ENCODE measurements at regions of chr5 and their contacts with region 1.

Region 1: DNA sequence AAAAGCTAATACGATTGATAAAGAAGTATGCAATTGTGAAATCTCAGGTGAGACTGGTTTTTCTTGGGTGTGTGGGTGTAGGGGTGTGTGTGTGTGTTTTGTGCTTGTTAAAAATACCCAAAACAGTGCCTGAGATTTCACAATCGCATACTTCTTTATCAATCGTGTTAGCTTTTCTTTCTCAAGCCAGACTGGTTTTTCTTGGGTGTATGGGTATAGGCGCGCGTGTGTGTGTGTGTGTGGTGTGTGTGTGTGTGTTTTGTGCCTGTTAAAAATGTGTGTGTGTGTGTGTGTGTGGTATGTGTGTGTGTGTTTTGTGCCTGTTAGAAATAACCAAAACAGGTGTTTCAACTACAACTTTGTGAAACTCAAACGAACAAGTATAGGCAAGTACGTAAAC is 53.7 kb downstream of the CERT1 start:
- DNase-seq: no peak
- H3K4me3 ChIP-seq: no peak overlapping the region
- H3K4me3 Mint-ChIP-seq: no peak overlapping the region
- H3K27ac ChIP-seq: no peak overlapping the region
- H3K27ac Mint-ChIP-seq: peak overlapping the region in 1 of 7 donors; percentile 59
- H3K4me1 ChIP-seq: peaks cover 13 to 19% of the 10 kb centered on the region in 2 donors
- H3K4me1 Mint-ChIP-seq: peaks cover 19% of the 10 kb centered on the region
- H3K27me3 ChIP-seq: no peaks in the 10 kb centered on the region
- H3K27me3 Mint-ChIP-seq: no peaks in the 10 kb centered on the region
- CTCF ChIP-seq: no peak

Region 2: DNA sequence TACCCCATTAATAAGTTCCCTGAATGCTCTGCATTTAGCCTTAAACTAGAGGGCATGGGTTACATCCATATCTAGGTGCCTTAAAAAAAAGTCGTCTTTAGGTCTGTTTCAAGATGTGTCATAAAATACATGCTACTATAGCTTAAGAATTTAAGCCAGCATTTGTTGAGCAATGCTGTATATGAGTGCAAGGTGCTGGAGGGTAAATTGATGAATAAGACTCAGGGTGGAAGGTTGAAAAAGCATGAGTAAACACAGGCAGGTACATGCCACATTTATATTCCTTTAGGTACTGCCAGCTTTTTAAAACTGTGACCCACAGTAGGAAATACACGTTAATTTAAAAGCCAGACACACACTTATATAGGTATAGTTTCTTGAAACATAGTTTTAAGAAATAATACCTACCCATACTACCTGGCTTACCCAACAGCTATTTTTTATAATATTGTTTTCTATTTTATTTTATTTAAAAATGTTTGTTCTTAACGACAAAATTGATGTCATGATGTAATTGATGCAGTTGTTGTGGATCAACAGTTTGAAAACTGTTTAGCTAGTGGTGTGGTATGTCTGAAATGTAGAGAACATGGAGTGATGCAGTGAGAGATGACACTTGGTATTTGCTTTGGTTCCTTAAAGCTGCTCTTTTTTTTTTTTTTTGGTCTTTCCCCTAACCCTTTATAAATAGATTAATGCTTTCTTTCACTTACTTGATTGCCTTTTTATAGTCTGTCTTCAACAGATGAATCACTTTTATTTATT is 116.8 kb before region 1 on chr5:
- intact Hi-C with region 1: no loop called
- DNase-seq: no peak
- H3K4me3 ChIP-seq: no peak overlapping the region
- H3K4me3 Mint-ChIP-seq: no peak overlapping the region
- H3K27ac ChIP-seq: no peak overlapping the region
- H3K27ac Mint-ChIP-seq: no peak overlapping the region
- H3K4me1 ChIP-seq: peaks cover 22 to 31% of the 10 kb centered on the region in 2 donors
- H3K4me1 Mint-ChIP-seq: peaks cover 33% of the 10 kb centered on the region
- H3K27me3 ChIP-seq: no peaks in the 10 kb centered on the region
- H3K27me3 Mint-ChIP-seq: no peaks in the 10 kb centered on the region
- CTCF ChIP-seq: no peak

Region 3: GRCh38 chr5:75482482-75482881 is 24.8 kb after region 1 on chr5:
- intact Hi-C with region 1: no loop called
- DNase-seq: no peak
- H3K4me3 ChIP-seq: no peak overlapping the region
- H3K4me3 Mint-ChIP-seq: no peak overlapping the region
- H3K27ac ChIP-seq: no peak overlapping the region
- H3K27ac Mint-ChIP-seq: no peak overlapping the region
- H3K4me1 ChIP-seq: no peaks in the 10 kb centered on the region
- H3K4me1 Mint-ChIP-seq: peaks cover 8% of the 10 kb centered on the region
- H3K27me3 ChIP-seq: no peaks in the 10 kb centered on the region
- H3K27me3 Mint-ChIP-seq: peaks cover 0 to 1% (median 0%) of the 10 kb centered on the region in 3 donors
- CTCF ChIP-seq: no peak

Region 4: GRCh38 chr5:75496026-75496425 is 38.3 kb after region 1 on chr5:
- intact Hi-C with region 1: loop called in 1 of 2 experiments (anchors 5 kb)
- DNase-seq: no peak
- H3K4me3 ChIP-seq: no peak overlapping the region
- H3K4me3 Mint-ChIP-seq: no peak overlapping the region
- H3K27ac ChIP-seq: no peak overlapping the region
- H3K27ac Mint-ChIP-seq: no peak overlapping the region
- H3K4me1 ChIP-seq: no peaks in the 10 kb centered on the region
- H3K4me1 Mint-ChIP-seq: no peaks in the 10 kb centered on the region
- H3K27me3 ChIP-seq: no peaks in the 10 kb centered on the region
- H3K27me3 Mint-ChIP-seq: no peaks in the 10 kb centered on the region
- CTCF ChIP-seq: no peak